Right ventricle myocardium inferior (tissue), 1 donor: ENCODE measurements at regions of chr15 and their contacts with region 1.

Region 1: GRCh38 chr15:72473614-72474465 is at the start of gene ARIH1:
- DNase-seq: peak; percentile 98
- ATAC-seq: peak; percentile 98
- total RNA-seq, gene ARIH1: 163 TPM

Region 2: GRCh38 chr15:72272213-72273002 is 201.4 kb before region 1 on chr15 and contains the start of gene PARP6:
- intact Hi-C with region 1: loop called (anchors 10 kb)
- DNase-seq: peak; percentile 99
- ATAC-seq: peak; percentile 100
- total RNA-seq, gene PARP6: 46.4 TPM

Region 3: GRCh38 chr15:72339777-72340177 is 134.1 kb before region 1 on chr15:
- intact Hi-C with region 1: no loop called
- DNase-seq: no peak
- ATAC-seq: no peak

Region 4: GRCh38 chr15:72375847-72376581 is 97.8 kb before region 1 on chr15 and contains the start of gene HEXA:
- intact Hi-C with region 1: loop called (anchors 2 kb)
- DNase-seq: peak; percentile 98
- ATAC-seq: peak; percentile 96
- total RNA-seq, gene HEXA: 64.3 TPM

Region 5: DNA sequence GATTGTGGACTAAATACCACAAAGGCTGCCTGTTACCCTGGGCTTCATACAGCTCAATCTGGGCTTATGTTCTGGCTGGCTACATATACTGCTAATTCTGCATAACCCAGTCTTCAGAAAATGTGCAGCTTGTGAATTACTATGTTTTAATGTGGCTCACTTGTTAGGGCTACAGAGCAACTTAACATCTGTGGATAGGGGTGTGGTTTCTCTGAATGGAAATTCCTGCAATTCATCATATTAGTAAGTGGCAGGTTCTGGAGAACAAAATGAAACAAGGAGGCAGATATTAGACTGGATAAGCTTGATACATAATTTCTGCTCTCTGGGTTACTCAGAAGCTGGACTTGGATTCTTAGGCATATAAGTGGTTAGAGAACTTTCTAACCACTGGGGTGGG is 69.0 kb before region 1 on chr15:
- intact Hi-C with region 1: no loop called
- DNase-seq: no peak
- ATAC-seq: no peak

Region 6: GRCh38 chr15:72521682-72522081 is 47.8 kb after region 1 on chr15:
- intact Hi-C with region 1: no loop called
- DNase-seq: no peak
- ATAC-seq: no peak

Region 7: DNA sequence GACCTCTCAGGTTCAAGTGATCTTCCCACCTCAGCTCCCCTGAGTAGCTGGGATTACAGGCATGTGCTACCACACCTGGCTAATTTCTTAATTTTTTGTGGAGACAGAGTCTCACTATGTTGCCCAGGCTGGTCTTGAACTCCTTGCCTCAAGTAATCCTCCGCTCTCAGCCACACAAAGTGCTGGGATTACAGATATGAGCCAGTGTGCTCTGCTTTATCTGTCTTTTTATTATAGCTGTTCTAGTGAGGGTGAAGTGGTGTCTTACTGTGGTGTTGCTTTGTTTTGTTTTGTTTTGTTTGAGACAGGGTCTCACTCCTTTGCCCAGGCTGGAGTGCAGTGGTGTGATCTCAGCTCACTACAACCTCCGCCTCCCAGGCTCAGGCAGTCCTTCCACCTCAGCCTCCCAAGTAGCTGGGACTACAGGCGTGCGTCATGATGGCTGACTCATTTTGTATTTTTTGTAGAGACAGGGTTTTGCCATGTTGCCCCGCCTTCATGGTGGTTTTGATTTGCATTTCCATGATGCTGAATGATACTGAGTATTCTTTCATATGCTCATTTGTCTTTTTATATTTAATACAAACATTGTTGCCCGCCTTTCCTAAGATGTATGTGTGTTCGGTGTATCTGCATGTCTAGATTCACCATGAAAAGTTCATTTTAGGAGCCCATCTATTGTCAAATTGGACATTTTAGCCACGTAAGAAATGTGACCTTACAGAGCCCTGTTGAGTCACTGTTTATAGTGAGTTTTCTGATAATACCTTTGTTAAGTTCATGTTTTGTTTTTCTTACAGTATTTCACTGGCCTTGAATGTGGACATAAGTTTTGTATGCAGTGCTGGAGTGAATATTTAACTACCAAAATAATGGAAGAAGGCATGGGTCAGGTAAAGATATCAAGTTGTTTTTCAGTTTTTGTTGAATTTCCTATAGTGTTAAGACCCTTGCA is 80.9 kb after region 1 on chr15:
- intact Hi-C with region 1: no loop called
- DNase-seq: no peak
- ATAC-seq: no peak